CD4-positive, alpha-beta T cell (primary cell): ENCODE measurements at regions of chr18 and their contacts with region 1.

Region 1: GRCh38 chr18:45974088-45974536 is 7.0 kb upstream of the EPG5 start:
- DNase-seq: peak; percentile 40 to 86 (median 58)
- ATAC-seq: peak; percentile 86
- H3K4me3 ChIP-seq: no peak overlapping the region
- H3K4me3 Mint-ChIP-seq: no peak overlapping the region
- H3K27ac ChIP-seq: no peak overlapping the region
- H3K27ac Mint-ChIP-seq: peak overlapping the region; percentile 28
- H3K4me1 ChIP-seq: no peaks in the 10 kb centered on the region
- H3K4me1 Mint-ChIP-seq: peaks cover 6% of the 10 kb centered on the region
- H3K27me3 ChIP-seq: no peaks in the 10 kb centered on the region
- H3K27me3 Mint-ChIP-seq: no peaks in the 10 kb centered on the region
- CTCF ChIP-seq: peak; percentile 77

Region 2: DNA sequence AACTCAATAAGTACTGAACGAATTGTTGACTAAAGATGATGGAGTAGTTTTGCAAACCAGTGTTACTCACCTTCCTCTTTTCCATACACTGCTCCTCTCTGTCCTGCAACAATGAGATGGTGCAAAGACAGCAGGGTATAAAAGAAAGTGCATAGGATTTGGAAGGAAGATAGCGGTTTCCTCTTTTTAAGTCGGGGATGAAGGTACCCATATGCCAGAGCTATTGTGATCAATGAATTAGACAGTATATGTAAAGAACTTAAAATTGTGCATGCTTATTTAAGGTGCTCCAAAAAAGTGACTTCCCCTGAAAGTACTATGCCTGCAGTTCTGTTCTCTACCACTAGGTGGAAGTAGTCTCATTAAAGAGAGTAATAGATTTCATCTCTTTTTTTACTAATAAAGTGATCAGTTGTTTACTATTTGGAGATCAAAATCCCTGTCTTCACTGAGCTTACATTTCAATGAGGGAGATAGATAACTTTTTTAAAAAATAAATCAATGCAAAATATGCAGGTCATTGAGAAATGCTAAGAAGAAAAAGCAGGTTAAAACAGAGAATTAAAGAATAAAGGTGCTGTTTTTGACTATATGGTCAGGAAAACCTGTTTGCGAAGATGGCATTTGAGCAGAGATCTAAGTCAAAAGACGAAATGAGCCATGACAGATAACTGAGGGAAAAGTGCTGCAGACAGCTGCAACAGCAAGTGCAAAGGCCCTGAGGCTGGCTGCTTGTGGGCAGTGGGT is 698.6 kb before region 1 on chr18:
- CTCF ChIA-PET with region 1: no interaction called
- POLR2A ChIA-PET with region 1: no interaction called
- intact Hi-C with region 1: loop called in 1 of 2 experiments (anchors 10 kb)
- DNase-seq: peak in 3 of 14 experiments; percentile 19 to 39 (median 32)
- ATAC-seq: no peak
- H3K4me3 ChIP-seq: no peak overlapping the region
- H3K4me3 Mint-ChIP-seq: no peak overlapping the region
- H3K27ac ChIP-seq: no peak overlapping the region
- H3K27ac Mint-ChIP-seq: no peak overlapping the region
- H3K4me1 ChIP-seq: no peaks in the 10 kb centered on the region
- H3K4me1 Mint-ChIP-seq: no peaks in the 10 kb centered on the region
- H3K27me3 ChIP-seq: peaks cover 0 to 2% of the 10 kb centered on the region in 2 experiments
- H3K27me3 Mint-ChIP-seq: no peaks in the 10 kb centered on the region
- CTCF ChIP-seq: peak; percentile 92

Region 3: DNA sequence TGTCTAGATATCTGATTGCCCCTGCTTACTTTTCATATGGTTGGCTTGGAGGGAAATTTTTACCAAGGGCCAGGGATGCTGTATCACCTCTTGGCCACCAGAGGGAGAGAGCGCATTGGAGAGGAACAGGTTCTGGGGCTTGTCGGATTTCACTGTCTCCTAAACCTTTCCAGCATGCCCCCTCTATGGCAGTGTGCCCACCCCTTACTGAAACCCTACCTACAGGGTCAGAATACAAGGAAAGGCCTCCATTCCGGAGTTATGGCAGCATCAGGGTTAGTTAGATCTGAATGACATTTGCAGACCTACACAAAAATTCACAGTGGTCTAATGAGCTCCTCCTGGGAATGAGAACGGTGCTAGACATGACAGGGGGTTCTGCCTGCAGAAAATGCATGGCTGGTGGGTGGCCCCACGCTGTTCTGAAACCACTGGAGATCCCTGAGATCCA is 353.0 kb before region 1 on chr18:
- CTCF ChIA-PET with region 1: no interaction called
- POLR2A ChIA-PET with region 1: no interaction called
- intact Hi-C with region 1: loop called in 1 of 2 experiments (anchors 1 kb)
- DNase-seq: peak in 13 of 14 experiments; percentile 2 to 67 (median 23)
- ATAC-seq: peak; percentile 55
- H3K4me3 ChIP-seq: no peak overlapping the region
- H3K4me3 Mint-ChIP-seq: no peak overlapping the region
- H3K27ac ChIP-seq: no peak overlapping the region
- H3K27ac Mint-ChIP-seq: no peak overlapping the region
- H3K4me1 ChIP-seq: no peaks in the 10 kb centered on the region
- H3K4me1 Mint-ChIP-seq: no peaks in the 10 kb centered on the region
- H3K27me3 ChIP-seq: peaks cover 0 to 2% of the 10 kb centered on the region in 2 experiments
- H3K27me3 Mint-ChIP-seq: no peaks in the 10 kb centered on the region
- CTCF ChIP-seq: peak; percentile 90

Region 4: DNA sequence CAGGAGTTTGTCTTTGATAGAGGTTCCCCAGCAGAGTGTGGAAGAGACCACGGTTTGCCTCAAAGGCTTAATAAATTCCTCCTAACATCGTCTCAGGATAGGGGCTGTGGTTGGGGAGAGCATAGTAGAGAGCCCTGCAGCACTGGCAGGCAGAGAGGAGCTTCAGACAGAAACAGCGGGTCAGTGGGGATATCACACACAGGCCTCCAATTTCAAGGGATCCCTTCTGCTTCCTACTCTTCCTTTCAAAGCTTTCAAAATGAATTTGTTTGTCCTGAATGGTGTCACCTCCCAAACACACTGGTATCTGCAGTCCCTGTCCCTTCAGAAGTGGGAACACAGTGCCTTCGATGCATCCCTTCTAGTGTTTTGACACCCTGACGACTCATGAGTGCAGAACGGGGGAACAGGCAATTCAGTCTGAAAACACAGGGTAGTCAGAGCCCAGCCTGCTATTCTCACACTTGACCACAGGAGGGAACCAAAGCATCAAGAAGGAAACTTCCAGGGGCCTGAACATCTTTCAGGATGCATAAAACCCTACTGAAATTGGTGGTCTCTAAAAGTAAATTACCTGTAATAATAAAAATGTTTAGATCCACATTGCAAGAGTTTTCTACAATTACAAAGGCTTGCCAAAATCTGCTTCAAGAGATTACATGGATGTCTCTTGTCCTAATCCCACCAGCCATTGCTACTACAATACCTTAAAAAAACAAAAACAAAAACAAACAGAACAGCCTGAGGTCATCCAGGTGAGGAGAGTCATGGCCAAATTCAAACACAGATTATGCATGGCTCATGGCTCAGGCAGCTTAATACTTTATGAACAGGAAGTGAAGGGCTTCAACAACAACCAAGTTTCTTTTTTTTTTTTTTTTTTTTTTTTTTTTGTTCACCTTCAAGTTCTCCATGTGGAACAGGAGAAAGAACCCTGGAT is 309.0 kb before region 1 on chr18:
- CTCF ChIA-PET with region 1: interaction called, 7 read pairs
- POLR2A ChIA-PET with region 1: no interaction called
- intact Hi-C with region 1: loop called (anchors 1 to 2 kb)
- DNase-seq: peak; percentile 47 to 85 (median 59)
- ATAC-seq: peak; percentile 75
- H3K4me3 ChIP-seq: no peak overlapping the region
- H3K4me3 Mint-ChIP-seq: peak overlapping the region; percentile 59
- H3K27ac ChIP-seq: no peak overlapping the region
- H3K27ac Mint-ChIP-seq: peak overlapping the region; percentile 69
- H3K4me1 ChIP-seq: peaks cover 53% of the 10 kb centered on the region
- H3K4me1 Mint-ChIP-seq: peaks cover 61% of the 10 kb centered on the region
- H3K27me3 ChIP-seq: no peaks in the 10 kb centered on the region
- H3K27me3 Mint-ChIP-seq: no peaks in the 10 kb centered on the region
- CTCF ChIP-seq: peak; percentile 93

Region 5: GRCh38 chr18:45775241-45775676 is 198.9 kb before region 1 on chr18:
- CTCF ChIA-PET with region 1: no interaction called
- POLR2A ChIA-PET with region 1: no interaction called
- intact Hi-C with region 1: no loop called
- DNase-seq: peak; percentile 28 to 76 (median 46)
- ATAC-seq: peak; percentile 83
- H3K4me3 ChIP-seq: peak overlapping the region; percentile 74
- H3K4me3 Mint-ChIP-seq: peak overlapping the region; percentile 80
- H3K27ac ChIP-seq: no peak overlapping the region
- H3K27ac Mint-ChIP-seq: peak overlapping the region; percentile 28
- H3K4me1 ChIP-seq: peaks cover 27% of the 10 kb centered on the region
- H3K4me1 Mint-ChIP-seq: peaks cover 23% of the 10 kb centered on the region
- H3K27me3 ChIP-seq: no peaks in the 10 kb centered on the region
- H3K27me3 Mint-ChIP-seq: peaks cover 36% of the 10 kb centered on the region
- CTCF ChIP-seq: no peak

Region 6: DNA sequence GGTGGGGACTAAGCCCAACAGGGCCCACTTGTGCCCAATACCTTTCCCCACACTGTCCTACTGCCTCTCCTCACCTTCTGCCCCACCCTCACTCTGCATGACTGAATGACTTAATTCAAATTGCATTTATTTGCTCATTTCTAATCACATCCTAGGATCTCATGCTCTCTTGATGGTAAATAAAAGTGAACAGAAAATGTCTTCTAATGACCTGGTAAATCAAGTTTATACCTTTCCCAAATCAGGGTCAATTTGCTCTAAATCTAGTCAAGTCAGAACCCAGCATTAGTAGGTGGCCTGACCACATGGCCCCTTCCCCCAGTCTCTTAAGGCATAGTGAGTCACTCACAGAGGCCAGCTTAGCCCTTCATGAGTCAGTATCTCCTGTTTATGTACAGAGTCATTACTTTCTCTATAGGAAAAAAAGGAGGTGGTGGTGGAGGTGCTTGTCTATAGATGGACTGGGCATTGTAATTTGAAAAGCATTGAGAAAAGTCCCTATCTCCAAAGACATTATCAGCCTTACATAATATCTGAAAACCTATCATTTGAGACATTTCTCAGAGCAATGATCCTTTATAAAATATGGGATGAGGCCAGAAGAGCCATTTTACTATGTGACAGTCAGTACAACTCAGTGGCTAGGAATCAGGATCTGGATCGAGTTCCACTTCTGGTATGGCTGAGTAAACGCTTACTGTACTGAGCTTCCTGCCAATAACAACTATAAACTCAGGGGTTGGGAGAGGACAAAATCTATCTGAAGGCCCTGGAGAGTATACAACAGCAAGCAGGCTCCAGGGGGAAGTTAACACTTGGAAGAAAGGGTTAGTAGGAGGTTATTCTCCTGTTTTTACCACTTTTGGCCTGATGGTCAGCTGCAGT is 171.3 kb before region 1 on chr18:
- CTCF ChIA-PET with region 1: no interaction called
- POLR2A ChIA-PET with region 1: no interaction called
- intact Hi-C with region 1: no loop called
- DNase-seq: no peak
- ATAC-seq: no peak
- H3K4me3 ChIP-seq: no peak overlapping the region
- H3K4me3 Mint-ChIP-seq: no peak overlapping the region
- H3K27ac ChIP-seq: no peak overlapping the region
- H3K27ac Mint-ChIP-seq: no peak overlapping the region
- H3K4me1 ChIP-seq: no peaks in the 10 kb centered on the region
- H3K4me1 Mint-ChIP-seq: no peaks in the 10 kb centered on the region
- H3K27me3 ChIP-seq: peaks cover 0 to 5% of the 10 kb centered on the region in 2 experiments
- H3K27me3 Mint-ChIP-seq: peaks cover 8% of the 10 kb centered on the region
- CTCF ChIP-seq: no peak

Region 7: GRCh38 chr18:45920367-45920766 is 53.7 kb before region 1 on chr18:
- CTCF ChIA-PET with region 1: interaction called, 3 read pairs
- POLR2A ChIA-PET with region 1: no interaction called
- intact Hi-C with region 1: loop called (anchors 5 to 10 kb)
- DNase-seq: peak in 4 of 14 experiments; percentile 8 to 25 (median 17)
- ATAC-seq: no peak
- H3K4me3 ChIP-seq: no peak overlapping the region
- H3K4me3 Mint-ChIP-seq: no peak overlapping the region
- H3K27ac ChIP-seq: no peak overlapping the region
- H3K27ac Mint-ChIP-seq: no peak overlapping the region
- H3K4me1 ChIP-seq: peaks cover 7% of the 10 kb centered on the region
- H3K4me1 Mint-ChIP-seq: peaks cover 18% of the 10 kb centered on the region
- H3K27me3 ChIP-seq: no peaks in the 10 kb centered on the region
- H3K27me3 Mint-ChIP-seq: no peaks in the 10 kb centered on the region
- CTCF ChIP-seq: no peak

Region 8: DNA sequence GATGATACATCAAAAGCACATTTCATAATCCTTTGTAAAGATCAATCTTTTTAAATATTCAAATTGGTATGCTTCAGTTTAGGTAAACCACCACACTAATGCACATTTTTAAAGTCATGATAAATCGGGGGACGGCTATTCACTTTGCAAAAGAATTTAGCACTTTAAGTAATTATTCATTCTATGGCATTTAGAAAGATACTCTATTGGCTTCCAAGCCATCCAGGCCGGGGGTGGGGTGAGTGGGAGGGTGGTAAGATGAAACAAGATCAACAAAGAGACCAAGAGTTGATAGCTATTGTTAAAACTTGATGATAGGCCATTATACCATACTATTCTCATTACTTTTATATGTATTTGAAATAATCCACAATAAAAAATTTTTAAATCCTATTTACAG is 48.0 kb before region 1 on chr18:
- CTCF ChIA-PET with region 1: interaction called, 4 read pairs
- POLR2A ChIA-PET with region 1: no interaction called
- intact Hi-C with region 1: loop called (anchors 5 to 10 kb)
- DNase-seq: no peak
- ATAC-seq: no peak
- H3K4me3 ChIP-seq: no peak overlapping the region
- H3K4me3 Mint-ChIP-seq: no peak overlapping the region
- H3K27ac ChIP-seq: no peak overlapping the region
- H3K27ac Mint-ChIP-seq: no peak overlapping the region
- H3K4me1 ChIP-seq: no peaks in the 10 kb centered on the region
- H3K4me1 Mint-ChIP-seq: peaks cover 5% of the 10 kb centered on the region
- H3K27me3 ChIP-seq: no peaks in the 10 kb centered on the region
- H3K27me3 Mint-ChIP-seq: no peaks in the 10 kb centered on the region
- CTCF ChIP-seq: no peak

Region 9: GRCh38 chr18:46019941-46020340 is 45.8 kb after region 1 on chr18:
- CTCF ChIA-PET with region 1: no interaction called
- POLR2A ChIA-PET with region 1: no interaction called
- intact Hi-C with region 1: loop called in 1 of 2 experiments (anchors 5 kb)
- DNase-seq: no peak
- ATAC-seq: no peak
- H3K4me3 ChIP-seq: no peak overlapping the region
- H3K4me3 Mint-ChIP-seq: no peak overlapping the region
- H3K27ac ChIP-seq: no peak overlapping the region
- H3K27ac Mint-ChIP-seq: no peak overlapping the region
- H3K4me1 ChIP-seq: no peaks in the 10 kb centered on the region
- H3K4me1 Mint-ChIP-seq: no peaks in the 10 kb centered on the region
- H3K27me3 ChIP-seq: no peaks in the 10 kb centered on the region
- H3K27me3 Mint-ChIP-seq: no peaks in the 10 kb centered on the region
- CTCF ChIP-seq: no peak